ENCODE measurements at regions of chr7 and their contacts with region 1.

Region 1: GRCh38 chr7:45259966-45260646 is 102.5 kb downstream of the RAMP3 start:
- DNase-seq: peak in 1 of 2 donors; percentile 40
- H3K4me3 ChIP-seq: no peak overlapping the region
- H3K27ac ChIP-seq: no peak overlapping the region
- H3K4me1 ChIP-seq: no peaks in the 10 kb centered on the region
- H3K27me3 ChIP-seq: peaks cover 0 to 7% of the 10 kb centered on the region in 2 donors
- CTCF ChIP-seq: peak; percentile 84 to 95

Region 2: GRCh38 chr7:45157653-45158401 is 102.3 kb before region 1 on chr7 and contains the start of gene RAMP3:
- intact Hi-C with region 1: loop called (anchors 5 kb)
- DNase-seq: peak in 1 of 2 donors; percentile 59
- H3K4me3 ChIP-seq: peak within 1 kb of the TSS; percentile 35 to 39
- H3K27ac ChIP-seq: no peak within 1 kb of the TSS
- H3K4me1 ChIP-seq: peaks cover 0 to 11% (median 5%) of the 10 kb centered on the region in 4 donors
- H3K27me3 ChIP-seq: peaks cover 0 to 26% of the 10 kb centered on the region in 2 donors
- CTCF ChIP-seq: no peak

Region 3: GRCh38 chr7:45446195-45446944 is 186.3 kb after region 1 on chr7:
- intact Hi-C with region 1: no loop called
- DNase-seq: no peak
- H3K4me3 ChIP-seq: no peak overlapping the region
- H3K27ac ChIP-seq: no peak overlapping the region
- H3K4me1 ChIP-seq: no peaks in the 10 kb centered on the region
- H3K27me3 ChIP-seq: no peaks in the 10 kb centered on the region
- CTCF ChIP-seq: no peak

Measured in tibial artery (tissue), 4 donors.